ENCODE measurements at regions of chr3 and their contacts with region 1.

Region 1: GRCh38 chr3:197186887-197187588 is 111.4 kb downstream of the DLG1 start:
- DNase-seq: peak in 1 of 2 experiments; percentile 66
- H3K4me3 ChIP-seq: no peak overlapping the region
- H3K4me1 ChIP-seq: no peaks in the 10 kb centered on the region; the same call in none of the 2 replicates
- H3K27me3 ChIP-seq: no peaks in the 10 kb centered on the region

Region 2: GRCh38 chr3:197002701-197003454 is 184.2 kb before region 1 on chr3:
- in situ Hi-C with region 1: loop called (anchors 25 kb)
- DNase-seq: peak; percentile 64 to 84
- H3K4me3 ChIP-seq: peak overlapping the region; percentile 33
- H3K4me1 ChIP-seq: peaks cover 7% of the 10 kb centered on the region
- H3K27me3 ChIP-seq: no peaks in the 10 kb centered on the region

Region 3: GRCh38 chr3:197298341-197298857 is 111.4 kb after region 1 on chr3 and contains the start of gene DLG1:
- in situ Hi-C with region 1: no loop called
- DNase-seq: peak; percentile 96 to 97
- H3K4me3 ChIP-seq: peak within 1 kb of the TSS; percentile 74
- H3K4me1 ChIP-seq: peaks cover 26% of the 10 kb centered on the region
- H3K27me3 ChIP-seq: no peaks in the 10 kb centered on the region

Measured in HAP-1 (cell line).